Thyroid gland (tissue), 4 donors: ENCODE measurements at regions of chr2 and their contacts with region 1.

Region 1: DNA sequence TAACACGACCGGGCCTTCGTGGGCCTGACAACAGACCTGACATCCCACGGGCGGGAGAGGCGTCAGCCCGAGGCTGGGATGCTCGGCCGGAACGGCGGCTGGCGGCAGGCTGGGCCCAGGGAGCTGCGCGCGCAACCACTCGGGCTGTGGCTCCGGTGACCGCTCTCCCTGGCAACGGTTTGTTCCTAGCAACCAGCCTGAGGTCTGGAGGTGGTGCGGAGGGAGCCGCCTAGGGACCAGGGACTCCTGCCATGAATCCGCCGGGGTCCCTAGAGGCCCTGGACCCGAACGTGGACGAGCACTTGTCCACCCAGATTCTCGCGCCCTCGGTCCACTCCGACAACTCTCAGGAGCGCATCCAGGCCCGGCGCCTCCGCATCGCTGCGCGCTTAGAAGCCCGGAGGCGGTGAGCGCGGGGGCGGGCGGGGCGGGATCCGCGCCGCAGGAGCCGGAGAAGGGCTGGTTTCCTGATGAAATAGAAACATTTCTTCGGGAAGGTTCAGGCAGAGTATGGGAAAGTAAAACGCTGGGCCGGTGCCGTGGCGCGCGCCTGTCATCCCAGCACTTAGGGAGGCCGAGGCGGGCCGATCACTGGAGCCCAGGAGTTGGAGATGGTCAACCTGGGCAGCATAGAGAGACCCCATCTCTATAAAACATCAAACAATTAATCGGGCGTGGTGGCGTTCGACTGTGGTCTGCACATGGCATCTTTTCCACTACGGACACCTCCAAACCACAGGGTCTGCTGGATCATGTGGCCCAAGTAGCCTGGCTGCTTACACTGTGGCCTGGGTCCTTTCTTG is at the start of gene DRC1:
- DNase-seq: peak; percentile 84 to 92
- H3K4me3 ChIP-seq: no peak within 1 kb of the TSS
- H3K27ac ChIP-seq: peak within 1 kb of the TSS in 1 of 3 donors; percentile 36
- H3K4me1 ChIP-seq: peaks cover 4 to 9% of the 10 kb centered on the region in 2 donors
- H3K27me3 ChIP-seq: no peaks in the 10 kb centered on the region
- CTCF ChIP-seq: no peak
- POLR2A ChIP-seq: no peak
- total RNA-seq, gene DRC1: not detected

Region 2: GRCh38 chr2:26469092-26469710 is 67.3 kb after region 1 on chr2:
- intact Hi-C with region 1: loop called (anchors 10 kb)
- DNase-seq: peak; percentile 15 to 35
- H3K4me3 ChIP-seq: no peak overlapping the region
- H3K27ac ChIP-seq: no peak overlapping the region
- H3K4me1 ChIP-seq: no peaks in the 10 kb centered on the region
- H3K27me3 ChIP-seq: no peaks in the 10 kb centered on the region
- CTCF ChIP-seq: peak in 5 of 6 experiments; percentile 17 to 51 (median 28)
- POLR2A ChIP-seq: no peak